BJ (cell line): ENCODE measurements at regions of chr14 and their contacts with region 1.

Region 1: GRCh38 chr14:77760381-77761246 is at the start of gene SNW1:
- DNase-seq: peak; percentile 76
- H3K4me3 ChIP-seq: peak within 1 kb of the TSS; percentile 76
- H3K27me3 ChIP-seq: no peaks in the 10 kb centered on the region
- CTCF ChIP-seq: 0 out of 2 replicates have a peak, but pooled peaks have one; percentile 7
- polyA plus RNA-seq, gene SNW1: 34.8 and 40.2 TPM in 2 replicates

Region 2: GRCh38 chr14:77738559-77739250 is 21.9 kb before region 1 on chr14:
- CTCF ChIA-PET with region 1: interaction called, 4 read pairs
- POLR2A ChIA-PET with region 1: interaction called, 11 read pairs
- DNase-seq: no peak
- H3K4me3 ChIP-seq: no peak overlapping the region
- H3K27me3 ChIP-seq: no peaks in the 10 kb centered on the region
- CTCF ChIP-seq: no peak